GM12878 (cell line): ENCODE measurements at regions of chr9 and their contacts with region 1.

Region 1: DNA sequence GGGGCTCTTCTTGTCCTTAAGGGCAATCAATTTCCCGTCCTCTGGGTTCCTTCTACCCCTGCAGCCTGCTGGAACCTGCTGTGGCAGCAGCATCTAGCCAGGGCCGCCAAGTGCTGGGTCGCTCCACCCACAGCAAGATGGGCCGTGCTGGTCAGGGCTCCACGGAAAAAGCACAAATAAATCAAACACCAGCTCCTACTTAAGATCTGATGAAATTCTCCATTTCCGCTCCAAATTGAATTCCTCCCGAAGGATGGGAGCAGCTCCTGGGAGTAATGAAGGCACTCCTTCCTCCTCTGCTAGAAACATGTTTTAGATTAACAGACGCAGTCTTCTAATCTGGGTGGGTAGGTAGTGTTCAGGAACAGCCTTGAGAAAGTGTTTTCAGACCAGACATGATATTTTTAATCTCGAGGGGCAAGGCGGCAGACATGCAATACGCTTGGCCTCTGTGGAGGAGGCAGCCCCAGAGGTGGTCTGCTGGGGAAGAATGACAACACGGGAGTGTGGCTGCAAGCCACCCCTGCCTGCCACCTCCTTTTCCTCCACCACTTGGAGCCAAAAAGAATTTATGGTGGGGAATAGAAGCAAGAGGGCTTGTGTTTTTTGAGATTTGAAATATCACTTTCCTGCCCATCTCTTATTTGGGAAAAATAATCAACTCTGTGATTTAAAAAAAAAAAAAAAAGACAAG is 194.0 kb downstream of the AOPEP start:
- DNase-seq: no peak
- ATAC-seq: no peak
- H3K4me3 ChIP-seq: no peak overlapping the region
- H3K27ac ChIP-seq: no peak overlapping the region
- H3K4me1 ChIP-seq: no peaks in the 10 kb centered on the region
- H3K27me3 ChIP-seq: no peaks in the 10 kb centered on the region
- CTCF ChIP-seq: no peak
- EP300 ChIP-seq: no peak
- POLR2A ChIP-seq: no peak
- RAD21 ChIP-seq: no peak

Region 2: DNA sequence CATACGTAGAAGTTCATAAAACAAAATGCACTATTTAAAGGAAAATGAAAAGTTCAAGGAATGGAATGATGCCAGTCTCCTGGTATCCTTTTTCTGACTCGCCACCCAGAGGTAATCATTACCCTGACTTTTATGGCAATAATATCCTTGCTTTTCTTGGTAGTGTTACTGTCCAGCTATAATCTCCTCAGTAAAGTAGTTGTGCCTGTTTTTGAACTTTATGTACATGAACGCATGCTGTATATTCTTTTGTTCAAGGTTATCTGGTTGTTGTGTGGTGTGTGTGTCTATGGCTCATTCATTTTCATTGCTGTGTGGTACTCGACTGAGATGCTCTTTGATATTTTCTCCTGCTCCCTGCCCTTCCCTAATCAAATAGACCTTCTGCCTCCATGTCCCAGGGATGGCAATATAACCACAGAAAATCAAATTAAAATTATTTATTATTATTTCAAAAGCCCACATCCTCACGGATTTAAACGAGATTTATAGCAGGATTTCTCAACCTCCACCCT is 252.1 kb before region 1 on chr9:
- CTCF ChIA-PET with region 1: interaction called, 11 read pairs
- POLR2A ChIA-PET with region 1: no interaction called
- RAD21 ChIA-PET with region 1: interaction called, 5 read pairs
- SMC1A ChIA-PET with region 1: interaction called, 5 read pairs
- in situ Hi-C with region 1: no loop called
- intact Hi-C with region 1: no loop called
- DNase-seq: no peak
- ATAC-seq: peak; percentile 8; the same call in 2 of the 3 replicates
- H3K4me3 ChIP-seq: no peak overlapping the region
- H3K27ac ChIP-seq: no peak overlapping the region
- H3K4me1 ChIP-seq: no peaks in the 10 kb centered on the region
- H3K27me3 ChIP-seq: no peaks in the 10 kb centered on the region; a peak in 1 of 4 replicates
- CTCF ChIP-seq: no peak
- EP300 ChIP-seq: no peak
- POLR2A ChIP-seq: no peak
- RAD21 ChIP-seq: no peak

Region 3: GRCh38 chr9:94799578-94800264 is 120.8 kb before region 1 on chr9:
- CTCF ChIA-PET with region 1: interaction called, 11 read pairs
- POLR2A ChIA-PET with region 1: interaction called, 3 read pairs
- RAD21 ChIA-PET with region 1: interaction called, 7 read pairs
- SMC1A ChIA-PET with region 1: interaction called, 10 read pairs
- in situ Hi-C with region 1: no loop called
- intact Hi-C with region 1: no loop called
- DNase-seq: no peak
- ATAC-seq: no peak
- H3K4me3 ChIP-seq: no peak overlapping the region
- H3K27ac ChIP-seq: no peak overlapping the region
- H3K4me1 ChIP-seq: peaks cover 39% of the 10 kb centered on the region
- H3K27me3 ChIP-seq: no peaks in the 10 kb centered on the region
- CTCF ChIP-seq: no peak
- EP300 ChIP-seq: no peak
- POLR2A ChIP-seq: no peak
- RAD21 ChIP-seq: no peak

Region 4: GRCh38 chr9:94805585-94805984 is 115.0 kb before region 1 on chr9:
- CTCF ChIA-PET with region 1: interaction called, 11 read pairs
- POLR2A ChIA-PET with region 1: interaction called, 3 read pairs
- RAD21 ChIA-PET with region 1: interaction called, 7 read pairs
- SMC1A ChIA-PET with region 1: interaction called, 10 read pairs
- in situ Hi-C with region 1: no loop called
- intact Hi-C with region 1: no loop called
- DNase-seq: peak; percentile 31
- ATAC-seq: 0 out of 3 replicates have a peak, but pooled peaks have one; percentile 2
- H3K4me3 ChIP-seq: peak overlapping the region; percentile 4; the same call in 1 of the 2 replicates
- H3K27ac ChIP-seq: peak overlapping the region; percentile 81
- H3K4me1 ChIP-seq: peaks cover 66% of the 10 kb centered on the region
- H3K27me3 ChIP-seq: no peaks in the 10 kb centered on the region
- CTCF ChIP-seq: no peak
- EP300 ChIP-seq: no peak
- POLR2A ChIP-seq: no peak
- RAD21 ChIP-seq: no peak

Region 5: DNA sequence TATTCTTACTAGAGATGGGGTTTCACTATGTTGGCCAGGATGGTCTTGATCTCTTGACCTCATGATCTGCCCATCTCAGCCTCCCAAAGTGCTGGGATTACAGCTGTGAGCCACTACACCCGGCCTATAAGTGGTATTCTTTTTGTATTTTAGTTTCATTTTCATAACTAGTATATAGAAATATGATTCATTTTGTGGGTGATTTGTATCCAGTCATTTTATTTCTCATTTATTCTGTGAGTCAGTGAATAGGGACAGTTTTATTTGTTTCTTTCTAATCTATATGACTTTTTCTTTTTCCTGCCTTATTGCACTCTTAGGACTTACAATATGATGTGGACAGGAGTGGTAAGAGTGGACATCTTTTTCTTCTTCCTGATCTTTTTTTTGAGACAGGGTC is 81.1 kb before region 1 on chr9:
- CTCF ChIA-PET with region 1: no interaction called
- POLR2A ChIA-PET with region 1: no interaction called
- RAD21 ChIA-PET with region 1: no interaction called
- SMC1A ChIA-PET with region 1: no interaction called
- in situ Hi-C with region 1: no loop called
- intact Hi-C with region 1: no loop called
- DNase-seq: no peak
- ATAC-seq: peak; percentile 70
- H3K4me3 ChIP-seq: no peak overlapping the region
- H3K27ac ChIP-seq: peak overlapping the region; percentile 3; the same call in 1 of the 2 replicates
- H3K4me1 ChIP-seq: no peaks in the 10 kb centered on the region
- H3K27me3 ChIP-seq: no peaks in the 10 kb centered on the region
- CTCF ChIP-seq: no peak
- EP300 ChIP-seq: no peak
- POLR2A ChIP-seq: no peak
- RAD21 ChIP-seq: no peak

Region 6: GRCh38 chr9:94903961-94904421 is 16.6 kb before region 1 on chr9:
- CTCF ChIA-PET with region 1: interaction called, 7 read pairs
- POLR2A ChIA-PET with region 1: interaction called, 3 read pairs
- RAD21 ChIA-PET with region 1: interaction called, 5 read pairs
- SMC1A ChIA-PET with region 1: interaction called, 13 read pairs
- in situ Hi-C with region 1: no loop called
- intact Hi-C with region 1: no loop called
- DNase-seq: no peak
- ATAC-seq: no peak
- H3K4me3 ChIP-seq: no peak overlapping the region
- H3K27ac ChIP-seq: no peak overlapping the region
- H3K4me1 ChIP-seq: no peaks in the 10 kb centered on the region
- H3K27me3 ChIP-seq: no peaks in the 10 kb centered on the region
- CTCF ChIP-seq: no peak
- EP300 ChIP-seq: no peak
- POLR2A ChIP-seq: no peak
- RAD21 ChIP-seq: no peak